ENCODE measurements at regions of chr1 and their contacts with region 1.

Region 1: GRCh38 chr1:153633716-153634665 is at the start of gene CHTOP:
- DNase-seq: peak; percentile 97

Region 2: DNA sequence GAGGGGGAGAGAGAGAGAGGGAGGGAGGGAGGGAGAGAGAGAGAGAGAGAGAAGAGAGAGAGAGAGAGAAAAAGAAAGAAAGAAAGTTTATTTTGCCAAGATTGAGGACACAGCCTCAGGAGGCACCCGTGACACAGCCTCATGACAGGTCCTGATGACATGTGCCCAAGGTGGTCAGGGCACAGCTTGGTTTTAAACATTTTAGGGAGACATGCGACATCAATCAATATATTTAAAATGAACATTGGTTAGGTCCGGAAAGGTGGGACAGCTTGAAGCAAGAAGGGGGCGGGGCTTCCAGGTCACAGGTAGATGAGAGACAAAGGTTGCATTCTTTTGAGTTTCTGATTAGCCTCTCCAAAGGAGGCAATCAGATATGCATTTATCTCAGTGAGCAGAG is 113.8 kb before region 1 on chr1:
- CTCF ChIA-PET with region 1: no interaction called
- POLR2A ChIA-PET with region 1: interaction called, 10 read pairs
- DNase-seq: no peak

Region 3: GRCh38 chr1:153566440-153567379 is 67.3 kb before region 1 on chr1:
- CTCF ChIA-PET with region 1: interaction called, 3 read pairs
- POLR2A ChIA-PET with region 1: interaction called, 11 read pairs
- DNase-seq: peak; percentile 62

Region 4: GRCh38 chr1:153598309-153599172 is 35.5 kb before region 1 on chr1:
- CTCF ChIA-PET with region 1: no interaction called
- POLR2A ChIA-PET with region 1: interaction called, 11 read pairs
- DNase-seq: peak; percentile 6

Region 5: GRCh38 chr1:153658400-153659174 is 24.6 kb after region 1 on chr1 and contains the start of gene SNAPIN:
- CTCF ChIA-PET with region 1: no interaction called
- POLR2A ChIA-PET with region 1: interaction called, 41 read pairs
- DNase-seq: peak; percentile 93

Region 6: GRCh38 chr1:153990468-153991150 is 356.6 kb after region 1 on chr1 and contains the start of gene RPS27:
- CTCF ChIA-PET with region 1: no interaction called
- POLR2A ChIA-PET with region 1: interaction called, 10 read pairs
- DNase-seq: peak; percentile 98